Left lung (tissue), 14 donors: ENCODE measurements at regions of chr17 and their contacts with region 1.

Region 1: DNA sequence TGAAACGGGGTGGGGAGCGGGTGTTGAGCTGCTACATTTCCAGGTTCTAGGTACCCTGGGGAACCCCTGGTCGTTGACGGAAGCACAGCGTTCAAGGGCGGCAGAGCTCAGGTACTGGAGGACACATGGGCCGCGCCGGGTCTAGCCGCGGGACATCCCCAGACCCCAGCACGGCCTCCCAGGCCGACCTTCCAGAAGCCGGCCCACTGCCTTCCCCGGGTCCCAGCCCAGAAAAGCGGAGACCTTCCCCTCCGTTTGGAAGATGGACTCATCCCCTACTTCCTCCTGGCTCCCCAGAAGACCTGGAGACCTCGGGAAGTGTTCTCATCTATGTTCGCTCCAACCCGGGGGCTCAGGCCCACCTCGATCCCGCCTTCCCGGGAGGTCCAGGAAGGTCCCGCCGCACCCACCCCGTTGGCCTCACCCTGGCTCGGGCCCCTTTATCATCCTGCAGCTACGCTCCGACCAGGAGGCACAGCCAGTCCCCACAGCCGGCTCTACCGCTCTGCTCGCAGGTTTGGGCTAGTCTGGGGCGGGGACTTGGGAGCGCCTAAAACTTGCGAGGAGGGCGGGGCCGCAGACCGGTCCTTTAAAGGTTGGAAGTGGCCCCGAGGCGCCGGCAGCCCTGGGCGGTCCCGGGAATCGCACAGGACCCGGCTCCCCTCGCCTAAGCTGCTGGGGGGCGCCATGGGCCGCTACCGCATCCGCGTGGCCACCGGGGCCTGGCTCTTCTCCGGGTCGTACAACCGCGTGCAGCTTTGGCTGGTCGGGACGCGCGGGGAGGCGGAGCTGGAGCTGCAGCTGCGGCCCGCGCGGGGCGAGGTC is at the start of gene ALOX12:
- DNase-seq: peak in 2 of 4 donors; percentile 49 to 87
- ATAC-seq: peak; percentile 93
- H3K4me3 ChIP-seq: peak within 1 kb of the TSS; percentile 13 to 19
- H3K27ac ChIP-seq: no peak within 1 kb of the TSS
- H3K4me1 ChIP-seq: peaks cover 0 to 14% of the 10 kb centered on the region in 2 donors
- H3K27me3 ChIP-seq: no peaks in the 10 kb centered on the region
- CTCF ChIP-seq: no peak
- polyA plus RNA-seq, gene ALOX12: 2.8 to 4.4 (median 3.3) TPM

Region 2: DNA sequence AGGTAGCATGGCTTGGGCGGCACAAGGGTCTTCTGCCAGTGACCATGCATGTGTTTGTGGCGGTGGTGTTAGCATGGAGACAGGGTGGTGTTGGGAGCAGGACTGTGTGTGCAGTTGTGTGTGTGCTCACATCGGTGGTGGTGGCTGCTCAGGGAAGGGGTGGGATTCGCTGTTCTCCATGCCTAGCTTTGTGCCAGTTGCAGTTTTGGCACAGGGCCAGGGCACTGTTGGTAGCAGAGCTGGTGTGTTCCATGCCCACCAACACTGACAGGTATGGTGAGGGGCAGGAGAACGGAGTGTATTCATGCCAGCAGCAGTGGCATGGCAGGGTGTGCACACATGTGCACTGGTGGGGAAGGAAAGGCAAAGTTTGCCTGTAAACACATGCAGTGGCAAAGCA is 86.8 kb before region 1 on chr17:
- intact Hi-C with region 1: loop called (anchors 5 kb)
- DNase-seq: no peak
- ATAC-seq: no peak
- H3K4me3 ChIP-seq: no peak overlapping the region
- H3K27ac ChIP-seq: no peak overlapping the region
- H3K4me1 ChIP-seq: peaks cover 0 to 4% of the 10 kb centered on the region in 2 donors
- H3K27me3 ChIP-seq: no peaks in the 10 kb centered on the region
- CTCF ChIP-seq: no peak

Region 3: DNA sequence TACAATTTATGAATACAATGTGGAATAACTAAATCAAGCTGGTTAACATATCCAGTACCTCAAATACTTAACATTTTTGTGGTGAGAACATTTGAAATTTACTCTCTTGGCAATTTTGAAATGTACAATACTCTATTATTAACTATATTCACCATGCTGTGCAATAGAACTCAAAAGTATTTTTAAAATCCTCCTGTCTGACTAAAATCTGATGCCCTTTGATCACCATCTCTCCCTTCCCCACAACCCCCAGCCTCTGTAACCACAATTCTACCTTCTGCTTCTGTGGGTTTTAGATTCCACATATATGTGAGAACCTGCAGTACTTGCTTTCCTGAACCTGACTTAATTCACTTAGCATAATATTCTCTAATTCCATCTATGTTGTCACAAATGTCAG is 71.4 kb before region 1 on chr17:
- intact Hi-C with region 1: no loop called
- DNase-seq: no peak
- ATAC-seq: no peak
- H3K4me3 ChIP-seq: no peak overlapping the region
- H3K27ac ChIP-seq: no peak overlapping the region
- H3K4me1 ChIP-seq: peaks cover 0 to 9% of the 10 kb centered on the region in 2 donors
- H3K27me3 ChIP-seq: no peaks in the 10 kb centered on the region
- CTCF ChIP-seq: no peak

Region 4: GRCh38 chr17:7095625-7096024 is 100.0 kb after region 1 on chr17:
- intact Hi-C with region 1: no loop called
- DNase-seq: no peak
- ATAC-seq: no peak
- H3K4me3 ChIP-seq: no peak overlapping the region
- H3K27ac ChIP-seq: peak overlapping the region in 1 of 2 donors; percentile 70
- H3K4me1 ChIP-seq: peaks cover 0 to 31% of the 10 kb centered on the region in 2 donors
- H3K27me3 ChIP-seq: peaks cover 0 to 2% of the 10 kb centered on the region in 2 donors
- CTCF ChIP-seq: no peak